CD4-positive, alpha-beta T cell (primary cell): ENCODE measurements at regions of chr14 and their contacts with region 1.

Region 1: DNA sequence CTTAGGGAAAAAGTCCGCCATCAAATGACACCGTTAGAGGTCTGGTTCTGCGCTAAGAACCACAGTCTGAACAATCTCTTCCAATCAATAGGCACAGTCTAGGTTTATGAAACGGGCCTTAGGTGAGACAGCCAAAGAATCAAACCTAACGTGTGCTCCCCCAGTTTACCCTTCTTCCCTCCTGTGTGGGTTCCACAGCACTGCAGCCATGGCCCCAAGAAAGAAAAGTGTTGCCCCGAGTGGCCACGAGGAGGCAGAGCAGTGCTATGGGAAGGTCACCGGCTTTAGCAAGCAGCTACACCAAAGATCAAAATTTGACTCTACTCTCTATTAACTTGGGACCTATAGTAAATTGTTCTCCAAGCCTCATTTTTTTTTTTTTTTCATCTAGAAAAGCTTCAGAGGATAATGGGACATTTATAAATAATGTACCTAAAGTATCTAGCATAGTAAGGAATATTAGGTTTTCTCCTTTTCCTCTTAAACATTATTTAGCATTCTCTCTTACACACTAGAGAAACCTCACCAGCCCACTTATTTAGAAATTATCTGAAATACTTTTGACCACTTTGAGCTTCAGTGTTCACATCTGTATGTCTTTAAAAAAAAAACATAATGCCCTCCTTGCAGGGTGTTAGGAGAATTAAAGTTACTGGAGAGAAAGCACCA is 70.2 kb upstream of the GPHB5 start:
- DNase-seq: peak; percentile 11 to 60 (median 29)
- ATAC-seq: peak; percentile 60
- H3K4me3 ChIP-seq: no peak overlapping the region
- H3K4me3 Mint-ChIP-seq: no peak overlapping the region
- H3K27ac ChIP-seq: no peak overlapping the region
- H3K27ac Mint-ChIP-seq: no peak overlapping the region
- H3K4me1 ChIP-seq: peaks cover 2% of the 10 kb centered on the region
- H3K4me1 Mint-ChIP-seq: peaks cover 3% of the 10 kb centered on the region
- H3K27me3 ChIP-seq: no peaks in the 10 kb centered on the region
- H3K27me3 Mint-ChIP-seq: no peaks in the 10 kb centered on the region
- CTCF ChIP-seq: peak; percentile 54

Region 2: GRCh38 chr14:62947301-62947700 is 441.6 kb before region 1 on chr14:
- CTCF ChIA-PET with region 1: no interaction called
- POLR2A ChIA-PET with region 1: no interaction called
- intact Hi-C with region 1: no loop called
- DNase-seq: no peak
- ATAC-seq: no peak
- H3K4me3 ChIP-seq: no peak overlapping the region
- H3K4me3 Mint-ChIP-seq: no peak overlapping the region
- H3K27ac ChIP-seq: no peak overlapping the region
- H3K27ac Mint-ChIP-seq: no peak overlapping the region
- H3K4me1 ChIP-seq: no peaks in the 10 kb centered on the region
- H3K4me1 Mint-ChIP-seq: no peaks in the 10 kb centered on the region
- H3K27me3 ChIP-seq: no peaks in the 10 kb centered on the region
- H3K27me3 Mint-ChIP-seq: no peaks in the 10 kb centered on the region
- CTCF ChIP-seq: no peak

Region 3: DNA sequence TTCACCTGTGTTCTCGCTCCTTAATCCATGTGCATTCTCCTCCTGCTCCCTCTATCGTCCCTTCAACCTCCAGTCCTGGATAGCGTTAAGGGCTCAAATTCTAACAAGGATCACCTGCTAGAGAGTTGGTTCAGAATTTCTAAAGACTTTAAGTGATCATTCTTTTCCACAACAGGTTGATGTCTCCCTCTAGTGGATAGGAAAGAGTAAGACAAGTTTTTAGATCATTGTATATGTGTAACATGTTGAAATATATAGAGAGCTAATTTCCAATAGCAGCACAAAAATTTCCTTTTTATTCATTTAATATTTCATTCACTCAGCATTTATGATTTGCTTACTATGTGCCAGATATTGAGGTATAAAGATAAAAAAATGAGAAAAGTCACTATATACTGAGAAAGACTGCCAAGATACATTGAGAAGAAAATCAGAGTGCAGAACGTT is 914.6 kb after region 1 on chr14:
- CTCF ChIA-PET with region 1: no interaction called
- POLR2A ChIA-PET with region 1: no interaction called
- intact Hi-C with region 1: loop called in 1 of 2 experiments (anchors 5 kb)
- DNase-seq: peak in 3 of 14 experiments; percentile 59 to 66 (median 59)
- ATAC-seq: peak; percentile 77
- H3K4me3 ChIP-seq: no peak overlapping the region
- H3K4me3 Mint-ChIP-seq: no peak overlapping the region
- H3K27ac ChIP-seq: no peak overlapping the region
- H3K27ac Mint-ChIP-seq: no peak overlapping the region
- H3K4me1 ChIP-seq: no peaks in the 10 kb centered on the region
- H3K4me1 Mint-ChIP-seq: peaks cover 4% of the 10 kb centered on the region
- H3K27me3 ChIP-seq: no peaks in the 10 kb centered on the region
- H3K27me3 Mint-ChIP-seq: peaks cover 11% of the 10 kb centered on the region
- CTCF ChIP-seq: peak; percentile 89